Psoas muscle (tissue), 8 donors: ENCODE measurements at regions of chr2 and their contacts with region 1.

Region 1: GRCh38 chr2:215454519-215455246 is 18.8 kb upstream of the FN1 start:
- DNase-seq: no peak
- ATAC-seq: no peak
- H3K4me3 ChIP-seq: no peak overlapping the region
- H3K27ac ChIP-seq: no peak overlapping the region
- H3K4me1 ChIP-seq: no peaks in the 10 kb centered on the region
- H3K27me3 ChIP-seq: no peaks in the 10 kb centered on the region
- CTCF ChIP-seq: peak; percentile 64

Region 2: DNA sequence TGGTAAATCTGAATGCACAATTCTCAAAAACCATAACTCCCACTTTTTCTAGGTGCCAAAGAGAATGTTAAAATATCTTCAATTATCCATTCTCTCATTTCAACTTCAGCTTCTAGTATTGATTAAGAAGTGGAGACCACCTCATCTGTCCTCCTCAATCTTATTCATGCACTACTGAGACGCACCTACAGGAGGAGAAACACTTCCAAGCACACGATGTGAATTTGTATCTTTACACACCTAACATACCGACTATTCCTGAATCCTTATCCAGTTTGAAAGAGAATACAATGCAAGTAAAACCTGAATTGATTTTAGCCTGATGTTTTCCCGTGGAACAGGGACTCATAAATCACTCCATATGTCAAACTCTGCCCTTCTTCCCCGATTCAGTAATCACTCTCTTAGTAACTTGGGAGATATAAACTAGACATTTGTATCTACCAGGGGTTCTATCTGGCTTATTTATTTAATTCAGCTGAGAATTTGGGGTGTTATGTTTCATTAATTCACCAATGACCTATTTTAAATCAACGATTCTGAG is 457.7 kb after region 1 on chr2:
- intact Hi-C with region 1: loop called (anchors 5 to 10 kb)
- DNase-seq: no peak
- ATAC-seq: no peak
- H3K4me3 ChIP-seq: no peak overlapping the region
- H3K27ac ChIP-seq: no peak overlapping the region
- H3K4me1 ChIP-seq: no peaks in the 10 kb centered on the region
- H3K27me3 ChIP-seq: peaks cover 0 to 12% (median 0%) of the 10 kb centered on the region in 3 donors
- CTCF ChIP-seq: no peak

Region 3: DNA sequence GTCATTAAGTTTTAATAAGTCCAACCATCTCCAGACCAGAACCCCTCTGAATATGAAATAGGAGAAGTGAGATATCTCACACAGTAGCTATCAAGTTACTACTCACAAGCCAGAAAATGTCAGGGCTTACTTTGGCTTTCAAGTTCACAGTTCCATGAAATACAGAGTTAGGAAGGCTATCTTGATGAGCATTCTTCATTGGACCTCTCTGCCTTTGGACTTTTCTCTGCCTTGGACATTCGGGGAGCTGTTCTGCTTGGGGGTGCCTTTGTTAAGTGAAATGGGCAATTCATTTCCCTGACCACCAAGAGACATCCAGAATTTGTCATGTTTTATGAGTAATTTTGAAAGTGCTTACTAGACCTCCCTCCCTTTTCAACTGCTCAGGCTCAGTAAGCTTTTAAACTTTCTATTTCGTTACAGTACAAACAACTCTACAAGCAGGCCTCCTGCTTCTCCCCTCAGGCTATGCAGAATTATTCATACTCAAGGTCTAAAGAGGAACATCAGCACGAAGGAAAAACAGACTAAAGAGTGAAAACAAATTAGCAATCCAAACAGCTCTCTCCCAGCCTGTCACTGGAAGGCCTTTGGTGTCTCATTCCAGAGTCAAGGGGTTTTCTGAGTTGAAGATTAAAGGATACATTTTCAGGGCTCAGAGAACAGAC is 463.4 kb after region 1 on chr2:
- intact Hi-C with region 1: loop called (anchors 5 to 10 kb)
- DNase-seq: no peak
- ATAC-seq: no peak
- H3K4me3 ChIP-seq: no peak overlapping the region
- H3K27ac ChIP-seq: no peak overlapping the region
- H3K4me1 ChIP-seq: no peaks in the 10 kb centered on the region
- H3K27me3 ChIP-seq: no peaks in the 10 kb centered on the region
- CTCF ChIP-seq: no peak

Region 4: DNA sequence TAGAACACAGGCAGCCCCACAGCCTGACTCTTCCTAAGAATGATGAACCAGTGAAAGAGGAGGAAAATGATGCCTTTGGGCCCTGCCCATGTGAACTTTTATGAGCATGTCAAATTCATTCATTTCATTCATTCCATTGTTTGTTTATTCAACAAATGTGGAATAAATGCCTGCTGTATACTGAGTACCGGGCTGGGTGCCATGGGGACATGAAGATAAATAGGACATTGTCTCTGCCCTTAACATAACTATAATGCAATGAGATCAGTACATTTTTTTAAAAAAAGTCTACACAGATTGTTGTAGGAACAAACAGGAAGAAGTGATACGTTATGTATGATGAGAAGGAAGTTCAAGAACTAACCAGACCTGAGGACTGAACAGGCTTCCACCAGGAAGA is 544.0 kb after region 1 on chr2:
- intact Hi-C with region 1: no loop called
- DNase-seq: no peak
- ATAC-seq: no peak
- H3K4me3 ChIP-seq: no peak overlapping the region
- H3K27ac ChIP-seq: no peak overlapping the region
- H3K4me1 ChIP-seq: no peaks in the 10 kb centered on the region
- H3K27me3 ChIP-seq: no peaks in the 10 kb centered on the region
- CTCF ChIP-seq: no peak